ENCODE measurements at regions of chr5 and their contacts with region 1.

Region 1: GRCh38 chr5:146165460-146165859 is 17.0 kb downstream of the LARS1 start:
- DNase-seq: no peak
- ATAC-seq: no peak
- H3K4me3 ChIP-seq: no peak overlapping the region
- H3K4me1 ChIP-seq: no peaks in the 10 kb centered on the region
- CTCF ChIP-seq: no peak

Region 2: DNA sequence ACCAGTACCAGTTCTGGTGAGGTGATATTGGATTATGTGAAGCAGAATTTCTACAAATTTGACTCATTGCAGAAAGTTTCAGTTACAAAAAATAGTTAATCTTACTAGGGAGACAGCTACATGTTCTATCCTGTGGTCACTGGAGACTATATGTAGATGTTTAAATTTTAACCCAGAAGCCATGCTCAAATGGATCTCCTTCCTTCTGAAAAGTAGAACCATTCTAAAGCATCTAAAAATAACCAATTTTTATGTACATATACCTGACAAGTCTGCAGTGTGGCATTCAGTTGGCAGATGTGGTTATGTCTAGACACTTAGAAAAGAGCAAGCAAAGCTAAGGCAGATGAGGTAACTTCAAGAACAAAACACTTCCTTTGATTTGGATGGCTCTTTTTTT is 107.6 kb after region 1 on chr5:
- intact Hi-C with region 1: loop called in 1 of 2 experiments (anchors 10 kb)
- DNase-seq: no peak
- ATAC-seq: no peak
- H3K4me3 ChIP-seq: no peak overlapping the region
- H3K4me1 ChIP-seq: no peaks in the 10 kb centered on the region
- CTCF ChIP-seq: no peak